ENCODE measurements at regions of chr20 and their contacts with region 1.

Region 1: GRCh38 chr20:53939572-53940359 is 130.6 kb downstream of the BCAS1 start:
- DNase-seq: peak; percentile 90
- H3K4me3 ChIP-seq: no peak overlapping the region
- H3K27ac ChIP-seq: peak overlapping the region; percentile 82
- H3K4me1 ChIP-seq: peaks cover 28% of the 10 kb centered on the region
- H3K27me3 ChIP-seq: no peaks in the 10 kb centered on the region
- CTCF ChIP-seq: peak; percentile 84 to 86

Region 2: DNA sequence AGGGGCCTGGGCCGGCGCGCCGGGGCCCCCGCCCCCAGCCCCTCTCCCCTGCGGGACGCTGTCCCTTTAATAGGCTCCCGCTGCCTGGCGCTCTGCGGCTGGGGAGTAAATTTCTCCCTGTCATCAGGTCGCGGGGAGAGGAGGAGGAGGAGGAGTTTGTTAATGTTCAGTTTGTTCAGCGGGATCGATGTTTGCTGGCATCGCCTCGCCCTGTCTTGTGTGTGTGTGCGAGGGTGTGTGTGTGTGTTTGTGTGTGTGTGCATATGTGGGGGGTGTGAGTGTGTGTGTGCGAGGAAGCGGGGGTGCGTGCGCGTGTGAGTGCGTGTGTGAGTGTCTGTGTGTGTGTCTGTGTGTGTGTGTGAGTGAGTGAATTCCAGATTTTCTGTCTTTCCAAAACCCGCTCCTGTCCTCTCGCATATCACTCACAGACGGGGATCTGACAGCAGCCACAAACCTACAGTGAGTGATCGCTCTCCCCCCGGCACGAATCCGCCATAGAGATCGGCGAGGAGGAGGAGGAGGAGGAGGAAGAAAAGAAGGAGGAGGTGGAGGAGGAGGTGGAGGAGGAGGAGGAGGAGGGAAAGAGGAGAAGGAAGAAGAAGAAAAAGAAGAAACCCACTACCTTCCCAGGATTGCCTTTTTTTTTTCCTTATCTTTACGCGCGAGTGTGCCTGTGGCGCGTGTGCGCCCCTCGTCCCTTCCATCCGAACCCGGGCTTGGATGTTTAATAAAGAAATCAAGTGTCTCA is 967.4 kb before region 1 on chr20 and contains the start of gene TSHZ2:
- CTCF ChIA-PET with region 1: no interaction called
- dilution Hi-C with region 1: no loop called
- in situ Hi-C with region 1: no loop called
- intact Hi-C with region 1: loop called (anchors 10 kb)
- DNase-seq: peak; percentile 81
- H3K4me3 ChIP-seq: peak within 1 kb of the TSS; percentile 82 to 92 (median 85)
- H3K27ac ChIP-seq: peak within 1 kb of the TSS; percentile 83
- H3K4me1 ChIP-seq: peaks cover 17% of the 10 kb centered on the region
- H3K27me3 ChIP-seq: no peaks in the 10 kb centered on the region
- CTCF ChIP-seq: no peak
- total RNA-seq, gene TSHZ2: 10.0 to 11.5 TPM

Region 3: DNA sequence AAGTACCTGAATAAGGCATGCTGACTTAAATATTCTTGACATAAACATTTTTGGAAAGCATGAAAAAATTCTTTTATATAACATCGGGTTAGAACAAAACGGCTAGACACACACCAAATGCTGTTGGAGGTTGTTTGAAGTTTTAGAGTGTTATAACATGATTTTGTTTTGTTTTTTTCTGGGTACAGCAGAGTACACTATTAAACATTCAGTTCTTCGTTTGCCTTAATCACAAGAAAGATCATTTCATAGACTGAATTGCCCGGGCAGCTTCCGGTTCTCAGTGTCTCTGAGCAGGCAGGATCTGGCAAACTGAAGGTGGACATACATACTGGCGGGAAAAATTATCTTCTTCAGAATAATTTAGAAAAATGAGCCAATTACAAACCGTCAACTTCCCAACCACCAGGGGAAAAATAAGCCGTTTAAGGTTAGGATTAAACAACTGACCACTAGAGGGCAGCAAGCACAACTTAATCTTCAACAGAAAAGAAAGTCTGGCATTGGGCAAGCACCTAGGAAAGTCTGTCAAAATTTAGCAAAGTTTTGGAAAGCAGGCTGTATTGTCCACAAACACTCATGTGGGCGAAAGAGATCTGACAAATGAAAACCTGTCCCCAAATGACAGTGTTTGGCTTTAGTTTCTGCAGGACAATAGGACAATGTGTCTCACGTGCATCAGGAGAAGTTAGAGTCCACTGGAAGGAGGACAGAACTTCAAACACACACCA is 361.1 kb before region 1 on chr20:
- CTCF ChIA-PET with region 1: no interaction called
- dilution Hi-C with region 1: no loop called
- in situ Hi-C with region 1: loop called in 1 of 2 experiments (anchors 5 kb)
- intact Hi-C with region 1: loop called (anchors 1 kb)
- DNase-seq: peak; percentile 75
- H3K4me3 ChIP-seq: peak overlapping the region in 1 of 3 experiments; percentile 16
- H3K27ac ChIP-seq: peak overlapping the region; percentile 76
- H3K4me1 ChIP-seq: peaks cover 41% of the 10 kb centered on the region
- H3K27me3 ChIP-seq: no peaks in the 10 kb centered on the region
- CTCF ChIP-seq: peak; percentile 71 to 81

Region 4: DNA sequence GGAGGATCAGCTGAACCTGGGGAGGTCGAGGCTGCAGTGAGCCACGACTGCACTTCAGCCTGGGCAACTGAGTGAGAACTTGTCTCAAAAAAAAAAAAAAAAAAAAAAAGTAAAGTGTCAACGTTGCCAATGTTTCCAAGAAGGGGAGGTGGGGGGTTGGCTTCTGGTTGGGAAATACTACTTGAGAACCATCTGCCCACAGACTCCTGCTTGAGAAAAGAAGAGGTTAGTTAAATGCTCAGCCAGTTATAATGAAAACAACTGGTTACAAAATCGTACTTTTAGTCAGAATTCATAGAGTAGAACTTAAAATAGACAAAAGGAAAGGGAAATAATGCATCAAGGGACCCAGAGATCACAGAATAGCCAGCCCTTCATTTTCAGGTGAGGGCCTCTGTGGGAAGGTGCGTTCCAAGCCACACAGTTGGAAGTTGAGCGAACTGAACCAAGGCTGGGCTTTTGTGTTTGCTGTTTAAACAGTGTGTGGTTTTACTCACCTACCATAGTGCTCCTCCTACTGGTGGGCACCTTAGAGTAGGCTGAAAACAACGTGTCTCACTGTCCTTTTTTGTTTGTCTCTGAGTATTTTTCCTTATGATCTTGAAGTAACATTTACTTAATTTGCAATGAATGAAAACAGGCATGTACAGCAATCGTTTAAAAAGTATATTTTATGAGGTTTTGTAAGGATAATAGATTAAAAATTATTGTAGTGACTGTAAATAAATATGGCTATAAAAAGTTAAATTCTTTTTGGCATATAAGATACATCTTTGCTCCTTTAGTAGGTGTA is 70.1 kb before region 1 on chr20:
- CTCF ChIA-PET with region 1: no interaction called
- dilution Hi-C with region 1: no loop called
- in situ Hi-C with region 1: no loop called
- intact Hi-C with region 1: loop called (anchors 1 kb)
- DNase-seq: peak; percentile 81
- H3K4me3 ChIP-seq: no peak overlapping the region
- H3K27ac ChIP-seq: peak overlapping the region; percentile 74
- H3K4me1 ChIP-seq: peaks cover 56% of the 10 kb centered on the region
- H3K27me3 ChIP-seq: no peaks in the 10 kb centered on the region
- CTCF ChIP-seq: peak; percentile 91 to 94

Region 5: GRCh38 chr20:53926428-53927028 is 13.2 kb before region 1 on chr20:
- CTCF ChIA-PET with region 1: interaction called, 16 read pairs
- dilution Hi-C with region 1: no loop called
- in situ Hi-C with region 1: no loop called
- intact Hi-C with region 1: no loop called
- DNase-seq: peak; percentile 99
- H3K4me3 ChIP-seq: no peak overlapping the region
- H3K27ac ChIP-seq: peak overlapping the region; percentile 90
- H3K4me1 ChIP-seq: peaks cover 30% of the 10 kb centered on the region
- H3K27me3 ChIP-seq: no peaks in the 10 kb centered on the region
- CTCF ChIP-seq: no peak

Region 6: DNA sequence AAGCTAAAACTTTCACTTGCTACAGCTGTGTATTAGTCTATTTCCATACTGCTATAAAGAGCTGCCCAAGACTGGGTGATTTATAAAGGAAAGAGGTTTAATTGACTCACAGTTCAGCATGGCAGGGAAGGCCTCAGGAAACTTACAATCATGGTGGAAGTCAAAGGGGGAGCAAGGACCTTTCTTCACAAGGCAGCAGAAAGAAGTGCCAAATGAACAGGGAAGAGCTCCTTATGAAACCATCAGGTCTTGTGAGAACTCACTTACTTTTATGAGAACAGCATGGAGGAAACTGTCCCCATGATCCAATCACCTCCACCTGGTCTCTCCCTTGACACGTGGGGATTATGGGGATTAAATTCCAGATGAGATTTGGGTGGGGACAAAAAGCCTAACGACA is 97.3 kb after region 1 on chr20:
- CTCF ChIA-PET with region 1: no interaction called
- dilution Hi-C with region 1: no loop called
- in situ Hi-C with region 1: no loop called
- intact Hi-C with region 1: no loop called
- DNase-seq: no peak
- H3K4me3 ChIP-seq: no peak overlapping the region
- H3K27ac ChIP-seq: no peak overlapping the region
- H3K4me1 ChIP-seq: no peaks in the 10 kb centered on the region
- H3K27me3 ChIP-seq: no peaks in the 10 kb centered on the region
- CTCF ChIP-seq: no peak

Region 7: DNA sequence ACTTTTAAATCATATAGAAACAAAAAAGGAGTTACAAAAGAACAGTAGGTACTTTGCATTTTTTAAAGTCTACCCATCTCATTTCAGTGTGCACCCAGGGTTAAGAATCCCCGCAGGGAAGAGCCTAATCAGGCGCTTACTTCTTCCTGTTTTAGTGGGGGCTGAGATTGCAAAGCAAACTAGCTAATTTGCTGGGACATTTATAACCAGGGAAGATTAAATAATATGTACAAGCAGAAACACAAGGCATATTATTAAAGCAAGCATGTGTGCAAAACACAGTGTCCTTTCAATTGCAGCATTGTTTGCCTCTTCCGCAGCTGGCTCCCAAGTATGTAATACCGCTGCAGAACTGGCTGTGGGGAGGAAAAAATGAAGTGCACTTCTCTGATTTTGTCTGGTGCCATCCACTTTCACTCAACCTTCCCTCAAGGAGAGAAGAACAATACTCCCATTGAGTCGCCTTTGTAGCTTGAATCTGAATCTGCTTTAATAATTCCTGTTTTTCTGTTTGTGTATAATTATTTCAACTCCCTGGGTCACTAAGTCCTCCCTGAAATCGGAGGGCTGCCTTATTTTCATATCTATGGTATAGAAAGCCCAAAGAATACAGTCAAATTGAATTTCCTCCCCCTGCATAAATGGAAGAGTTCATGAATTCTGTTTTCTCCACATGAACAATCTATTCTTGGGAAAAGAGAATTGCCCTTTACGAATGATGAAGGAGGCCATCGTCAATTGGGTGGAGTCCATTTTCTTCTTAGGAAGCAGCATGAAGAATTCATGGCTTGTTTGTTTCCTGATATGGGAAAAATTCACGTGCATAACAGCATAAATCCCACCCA is 153.9 kb after region 1 on chr20:
- CTCF ChIA-PET with region 1: no interaction called
- dilution Hi-C with region 1: no loop called
- in situ Hi-C with region 1: no loop called
- intact Hi-C with region 1: no loop called
- DNase-seq: no peak
- H3K4me3 ChIP-seq: no peak overlapping the region
- H3K27ac ChIP-seq: no peak overlapping the region
- H3K4me1 ChIP-seq: no peaks in the 10 kb centered on the region
- H3K27me3 ChIP-seq: no peaks in the 10 kb centered on the region
- CTCF ChIP-seq: no peak

Region 8: DNA sequence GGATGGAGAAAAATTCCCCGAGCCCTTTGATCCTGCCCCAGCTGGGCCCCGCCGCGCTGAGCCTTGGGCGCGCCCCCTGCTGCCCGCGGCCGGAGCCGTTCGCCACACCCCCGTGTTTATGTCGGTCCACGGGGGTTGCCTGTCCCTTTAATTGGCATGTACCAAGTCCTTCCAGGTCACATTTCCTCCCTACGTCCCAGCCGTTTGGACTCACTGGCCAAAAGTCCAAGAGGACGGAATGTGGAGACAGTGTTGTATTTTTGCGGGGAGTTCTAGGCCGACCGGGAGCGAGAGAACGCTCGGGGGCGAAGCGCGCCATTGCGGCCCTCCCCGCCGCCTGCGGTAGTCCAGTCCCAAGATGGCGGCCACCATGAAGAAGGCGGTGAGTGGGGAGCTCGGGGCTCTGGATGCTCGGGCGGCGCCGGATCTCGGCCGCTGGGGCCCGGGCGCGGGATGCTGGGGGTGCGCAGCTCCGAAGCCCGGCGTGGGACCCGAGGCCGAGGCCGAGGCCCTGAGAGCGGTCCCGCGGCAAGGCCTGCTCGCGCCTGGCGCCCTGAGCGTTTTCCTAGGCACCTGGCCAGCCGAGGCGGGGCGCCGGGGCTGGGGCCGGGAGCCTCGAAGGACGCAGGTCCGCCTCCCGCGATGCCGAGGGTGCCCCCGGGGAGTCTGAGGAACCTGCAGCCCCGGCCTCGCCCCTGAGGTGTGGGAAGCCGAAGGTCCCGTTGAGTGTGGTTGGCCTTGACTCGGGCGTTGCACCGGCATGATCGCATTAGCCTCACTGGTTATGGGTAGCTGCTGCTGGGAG is 268.2 kb after region 1 on chr20 and contains the start of gene PFDN4:
- CTCF ChIA-PET with region 1: no interaction called
- dilution Hi-C with region 1: no loop called
- in situ Hi-C with region 1: loop called in 1 of 2 experiments (anchors 10 kb)
- intact Hi-C with region 1: no loop called
- DNase-seq: peak; percentile 84
- H3K4me3 ChIP-seq: peak within 1 kb of the TSS; percentile 74 to 98 (median 91)
- H3K27ac ChIP-seq: peak within 1 kb of the TSS; percentile 99
- H3K4me1 ChIP-seq: peaks cover 11% of the 10 kb centered on the region
- H3K27me3 ChIP-seq: no peaks in the 10 kb centered on the region
- CTCF ChIP-seq: peak; percentile 65 to 91
- total RNA-seq, gene PFDN4: 28.9 to 45.3 TPM

Measured in mammary epithelial cell (primary cell).